Ovary (tissue), 10 donors: ENCODE measurements at regions of chr14 and their contacts with region 1.

Region 1: GRCh38 chr14:63180011-63180410 is 24.2 kb upstream of the RHOJ start:
- DNase-seq: no peak
- H3K4me3 ChIP-seq: no peak overlapping the region
- H3K27ac ChIP-seq: no peak overlapping the region
- H3K4me1 ChIP-seq: no peaks in the 10 kb centered on the region
- H3K27me3 ChIP-seq: no peaks in the 10 kb centered on the region
- CTCF ChIP-seq: no peak
- EP300 ChIP-seq: no peak
- POLR2A ChIP-seq: no peak

Region 2: DNA sequence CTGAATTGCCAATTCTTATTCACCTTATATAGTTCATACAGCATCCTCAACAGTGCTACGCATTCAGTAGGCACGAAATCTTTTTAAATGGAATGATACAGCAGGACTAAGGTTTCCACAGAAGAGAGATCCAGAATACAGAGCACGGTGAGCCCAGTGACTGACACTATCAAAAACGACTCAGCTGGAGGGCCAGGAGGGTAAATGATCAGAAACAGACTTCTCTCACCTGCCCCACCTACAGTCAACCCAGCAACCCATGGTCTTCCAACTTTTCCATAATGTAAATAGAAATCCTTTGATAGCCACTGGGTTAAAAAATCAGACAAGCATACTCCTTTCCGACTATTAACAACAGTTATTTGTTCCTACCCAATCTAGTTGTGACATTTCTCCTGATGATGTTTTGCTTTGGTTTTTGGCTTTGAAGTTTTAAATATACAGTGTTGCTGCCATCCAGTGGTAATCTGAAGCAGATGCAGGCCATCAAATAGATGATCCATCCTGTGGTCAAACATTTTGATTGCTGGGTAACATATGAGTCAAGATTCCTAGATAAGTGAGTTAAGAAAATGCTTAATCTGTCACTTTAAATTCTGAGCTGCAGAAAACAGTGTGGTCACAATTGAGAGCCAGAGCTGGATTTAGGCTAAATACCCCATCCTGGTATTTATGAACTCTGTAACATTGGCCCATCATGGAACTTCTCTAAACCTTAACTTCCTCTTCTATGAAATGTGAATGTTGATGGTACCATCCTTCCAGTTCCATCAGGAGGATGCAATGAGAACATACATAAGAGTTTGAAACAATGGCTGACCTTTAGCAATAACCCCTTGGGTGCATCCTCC is 96.7 kb after region 1 on chr14:
- intact Hi-C with region 1: loop called in 3 of 4 experiments (anchors 2 to 10 kb)
- DNase-seq: no peak
- H3K4me3 ChIP-seq: no peak overlapping the region
- H3K27ac ChIP-seq: no peak overlapping the region
- H3K4me1 ChIP-seq: peaks cover 9% of the 10 kb centered on the region
- H3K27me3 ChIP-seq: no peaks in the 10 kb centered on the region
- CTCF ChIP-seq: peak; percentile 37 to 81 (median 80)
- EP300 ChIP-seq: no peak
- POLR2A ChIP-seq: no peak